Activated CD4-positive, alpha-beta memory T cell treated with anti-CD3 and anti-CD28 coated beads for 36 hours (primary cell): ENCODE measurements at regions of chr15 and their contacts with region 1.

Region 1: DNA sequence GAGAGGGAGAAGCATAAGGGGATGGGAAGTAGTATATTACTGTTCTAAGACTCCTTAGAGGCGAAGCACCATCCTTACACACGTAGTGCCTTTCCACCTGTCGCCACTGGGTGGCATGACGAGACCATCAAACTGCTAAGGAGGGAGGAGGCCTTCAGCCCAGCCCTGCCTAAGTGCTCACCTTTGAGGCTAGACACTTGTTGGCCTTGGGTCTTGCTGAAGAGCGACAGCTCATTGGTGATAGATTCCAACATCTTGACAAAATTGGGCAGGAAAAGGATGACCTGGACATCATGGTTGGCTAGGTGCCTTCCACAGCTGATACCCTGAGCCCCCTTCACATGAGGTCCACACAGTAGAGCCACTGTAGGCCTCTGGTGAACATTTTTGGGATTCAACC is 19.6 kb downstream of the CLK3 start:
- DNase-seq: peak; percentile 84
- H3K4me3 Mint-ChIP-seq: no peak overlapping the region
- H3K27ac Mint-ChIP-seq: no peak overlapping the region
- H3K4me1 Mint-ChIP-seq: no peaks in the 10 kb centered on the region
- H3K27me3 Mint-ChIP-seq: no peaks in the 10 kb centered on the region

Region 2: GRCh38 chr15:74373731-74374647 is 261.2 kb before region 1 on chr15:
- CTCF ChIA-PET with region 1: interaction called, 57 read pairs
- POLR2A ChIA-PET with region 1: no interaction called
- intact Hi-C with region 1: loop called (anchors 1 kb)
- DNase-seq: peak; percentile 97
- H3K4me3 Mint-ChIP-seq: peak overlapping the region; percentile 71
- H3K27ac Mint-ChIP-seq: peak overlapping the region; percentile 35
- H3K4me1 Mint-ChIP-seq: peaks cover 24% of the 10 kb centered on the region
- H3K27me3 Mint-ChIP-seq: peaks cover 3% of the 10 kb centered on the region

Region 3: DNA sequence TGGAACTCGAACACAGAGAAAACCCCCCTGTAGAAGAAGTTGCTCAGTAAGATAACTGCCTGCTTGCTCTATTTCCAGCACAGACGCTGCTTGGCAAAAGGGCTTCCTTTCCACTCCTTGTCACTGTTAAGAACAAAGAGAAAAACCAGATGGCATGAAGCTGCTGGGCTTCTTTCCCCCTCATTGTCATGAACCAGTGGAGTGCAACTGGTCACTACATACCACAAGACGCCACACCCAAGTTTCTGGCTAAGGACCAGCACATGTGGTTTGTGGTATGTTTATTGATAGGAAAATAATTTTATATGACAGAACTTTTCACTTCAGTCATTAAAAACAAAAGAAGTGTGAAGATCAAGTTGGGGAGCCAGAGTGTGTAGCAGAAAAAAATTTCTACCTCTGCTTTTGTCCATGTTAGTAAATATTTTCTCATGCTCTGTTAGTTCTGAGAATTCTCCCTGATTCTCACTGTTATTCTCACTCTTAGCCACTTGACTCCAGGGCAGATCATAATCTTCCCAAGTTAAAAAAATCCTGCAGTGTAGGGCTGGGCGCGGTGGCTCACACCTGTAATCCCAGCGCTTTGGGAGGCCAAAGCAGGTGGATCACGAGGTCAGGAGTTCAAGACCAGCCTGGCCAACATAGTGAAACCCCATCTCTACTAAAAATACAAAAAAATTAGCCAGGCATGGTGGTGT is 18.3 kb after region 1 on chr15:
- CTCF ChIA-PET with region 1: interaction called, 11 read pairs
- POLR2A ChIA-PET with region 1: no interaction called
- intact Hi-C with region 1: no loop called
- DNase-seq: no peak
- H3K4me3 Mint-ChIP-seq: no peak overlapping the region
- H3K27ac Mint-ChIP-seq: no peak overlapping the region
- H3K4me1 Mint-ChIP-seq: peaks cover 19% of the 10 kb centered on the region
- H3K27me3 Mint-ChIP-seq: no peaks in the 10 kb centered on the region

Region 4: GRCh38 chr15:74723754-74724334 is 88.6 kb after region 1 on chr15:
- CTCF ChIA-PET with region 1: interaction called, 13 read pairs
- POLR2A ChIA-PET with region 1: no interaction called
- intact Hi-C with region 1: no loop called
- DNase-seq: no peak
- H3K4me3 Mint-ChIP-seq: no peak overlapping the region
- H3K27ac Mint-ChIP-seq: no peak overlapping the region
- H3K4me1 Mint-ChIP-seq: peaks cover 8% of the 10 kb centered on the region
- H3K27me3 Mint-ChIP-seq: peaks cover 6% of the 10 kb centered on the region

Region 5: GRCh38 chr15:74793135-74794028 is 158.2 kb after region 1 on chr15:
- CTCF ChIA-PET with region 1: interaction called, 16 read pairs
- POLR2A ChIA-PET with region 1: no interaction called
- intact Hi-C with region 1: no loop called
- DNase-seq: peak; percentile 81
- H3K4me3 Mint-ChIP-seq: peak overlapping the region; percentile 29
- H3K27ac Mint-ChIP-seq: peak overlapping the region; percentile 99
- H3K4me1 Mint-ChIP-seq: peaks cover 88% of the 10 kb centered on the region
- H3K27me3 Mint-ChIP-seq: no peaks in the 10 kb centered on the region

Region 6: GRCh38 chr15:74950078-74951000 is 315.1 kb after region 1 on chr15:
- CTCF ChIA-PET with region 1: interaction called, 13 read pairs
- POLR2A ChIA-PET with region 1: no interaction called
- intact Hi-C with region 1: loop called (anchors 5 kb)
- DNase-seq: peak; percentile 86
- H3K4me3 Mint-ChIP-seq: no peak overlapping the region
- H3K27ac Mint-ChIP-seq: no peak overlapping the region
- H3K4me1 Mint-ChIP-seq: peaks cover 9% of the 10 kb centered on the region
- H3K27me3 Mint-ChIP-seq: no peaks in the 10 kb centered on the region

Region 7: DNA sequence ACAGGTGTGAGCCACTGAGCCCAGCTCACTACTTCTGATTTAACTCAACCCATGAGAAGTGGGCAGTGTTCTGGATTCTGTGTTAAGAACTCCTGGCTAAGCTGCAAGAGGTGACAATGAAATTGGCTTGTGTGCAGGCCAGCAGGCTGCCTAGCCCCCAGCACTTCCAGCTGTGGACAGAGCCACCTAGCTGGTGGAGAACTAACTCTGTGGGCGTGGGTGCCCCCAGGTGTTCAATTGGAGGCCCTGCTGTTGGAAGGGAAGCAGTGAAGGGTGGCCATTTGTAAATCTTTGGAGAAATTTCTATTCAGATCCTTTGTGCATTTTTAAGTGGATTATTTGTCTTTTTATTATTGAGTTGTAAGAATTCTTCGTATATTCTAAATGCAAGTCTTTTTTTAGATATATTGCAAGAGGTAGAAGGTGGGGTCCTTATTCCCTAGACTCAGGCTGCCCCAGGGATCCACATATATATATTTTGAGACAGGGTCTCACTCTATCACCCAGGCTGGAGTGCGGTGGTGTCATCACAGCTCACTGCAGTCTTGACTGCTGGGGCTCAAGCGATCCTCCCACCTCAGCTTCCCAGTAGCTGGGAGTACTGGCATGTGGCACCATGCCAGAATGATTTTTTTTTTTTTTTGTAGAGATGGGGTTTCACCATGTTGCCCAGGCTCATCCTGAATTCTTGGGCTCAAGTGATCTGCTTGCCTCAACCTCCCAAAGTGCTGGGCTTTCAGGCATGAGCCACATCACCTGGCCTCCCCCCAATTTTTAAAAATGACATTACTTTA is 353.0 kb after region 1 on chr15:
- CTCF ChIA-PET with region 1: no interaction called
- POLR2A ChIA-PET with region 1: no interaction called
- intact Hi-C with region 1: no loop called
- DNase-seq: peak; percentile 68
- H3K4me3 Mint-ChIP-seq: no peak overlapping the region
- H3K27ac Mint-ChIP-seq: no peak overlapping the region
- H3K4me1 Mint-ChIP-seq: peaks cover 11% of the 10 kb centered on the region
- H3K27me3 Mint-ChIP-seq: peaks cover 12% of the 10 kb centered on the region